B cell (primary cell): ENCODE measurements at regions of chr11 and their contacts with region 1.

Region 1: DNA sequence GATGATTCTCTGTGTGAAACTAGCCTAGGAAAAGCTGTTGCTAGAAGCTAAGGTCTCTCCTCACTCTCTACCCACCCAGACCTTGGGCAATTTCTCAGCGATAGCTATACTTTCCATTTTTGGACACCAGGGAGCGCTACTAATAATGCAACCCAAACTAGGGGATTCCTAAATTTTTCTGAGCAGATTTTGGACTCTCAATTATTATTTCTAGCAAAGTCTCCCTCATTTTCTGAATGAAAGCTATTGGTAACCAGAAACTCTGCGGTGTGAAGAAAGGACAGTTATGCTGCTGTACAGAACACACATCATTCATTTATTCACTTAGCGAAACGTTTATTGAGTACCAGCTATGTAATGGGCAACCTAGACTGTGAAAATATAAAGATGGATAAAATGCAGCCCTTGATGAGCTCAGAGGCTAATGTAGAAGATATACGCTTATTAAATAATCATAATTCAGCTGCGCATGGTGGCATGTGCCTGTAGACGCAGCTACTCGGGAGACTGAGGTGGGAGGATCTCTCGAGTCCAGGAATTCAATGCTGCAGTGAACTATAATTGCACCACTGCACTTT is 6.1 kb upstream of the STIM1 start:
- DNase-seq: peak; percentile 80
- ATAC-seq: peak; percentile 64
- H3K4me3 ChIP-seq: no peak overlapping the region
- H3K4me3 Mint-ChIP-seq: no peak overlapping the region
- H3K27ac ChIP-seq: no peak overlapping the region
- H3K27ac Mint-ChIP-seq: no peak overlapping the region
- H3K4me1 ChIP-seq: peaks cover 24% of the 10 kb centered on the region in 2 donors
- H3K4me1 Mint-ChIP-seq: peaks cover 23% of the 10 kb centered on the region
- H3K27me3 ChIP-seq: no peaks in the 10 kb centered on the region
- H3K27me3 Mint-ChIP-seq: no peaks in the 10 kb centered on the region
- CTCF ChIP-seq: peak; percentile 83

Region 2: GRCh38 chr11:3797329-3798095 is 51.9 kb before region 1 on chr11 and contains the start of gene NUP98:
- CTCF ChIA-PET with region 1: interaction called, 10 read pairs
- POLR2A ChIA-PET with region 1: no interaction called
- intact Hi-C with region 1: loop called (anchors 1 kb)
- DNase-seq: peak; percentile 100
- ATAC-seq: peak; percentile 91
- H3K4me3 ChIP-seq: peak within 1 kb of the TSS; percentile 93 to 98 (median 96)
- H3K4me3 Mint-ChIP-seq: peak within 1 kb of the TSS; percentile 97
- H3K27ac ChIP-seq: peak within 1 kb of the TSS; percentile 93 to 97
- H3K27ac Mint-ChIP-seq: peak within 1 kb of the TSS; percentile 97
- H3K4me1 ChIP-seq: peaks cover 21 to 31% of the 10 kb centered on the region in 2 donors
- H3K4me1 Mint-ChIP-seq: peaks cover 35% of the 10 kb centered on the region
- H3K27me3 ChIP-seq: no peaks in the 10 kb centered on the region
- H3K27me3 Mint-ChIP-seq: no peaks in the 10 kb centered on the region
- CTCF ChIP-seq: no peak
- total RNA-seq, gene NUP98: 105 and 111 TPM in 2 replicates

Region 3: GRCh38 chr11:3894128-3894731 is 44.8 kb after region 1 on chr11:
- CTCF ChIA-PET with region 1: interaction called, 71 read pairs
- POLR2A ChIA-PET with region 1: interaction called, 25 read pairs
- intact Hi-C with region 1: loop called (anchors 1 kb)
- DNase-seq: peak; percentile 95
- ATAC-seq: peak; percentile 98
- H3K4me3 ChIP-seq: peak overlapping the region in 4 of 5 experiments; percentile 23 to 53 (median 32)
- H3K4me3 Mint-ChIP-seq: peak overlapping the region; percentile 78
- H3K27ac ChIP-seq: peak overlapping the region; percentile 71 to 82
- H3K27ac Mint-ChIP-seq: peak overlapping the region; percentile 89
- H3K4me1 ChIP-seq: peaks cover 67 to 72% of the 10 kb centered on the region in 2 donors
- H3K4me1 Mint-ChIP-seq: peaks cover 70% of the 10 kb centered on the region
- H3K27me3 ChIP-seq: no peaks in the 10 kb centered on the region
- H3K27me3 Mint-ChIP-seq: no peaks in the 10 kb centered on the region
- CTCF ChIP-seq: no peak

Region 4: GRCh38 chr11:3947061-3947460 is 97.7 kb after region 1 on chr11:
- CTCF ChIA-PET with region 1: interaction called, 19 read pairs
- POLR2A ChIA-PET with region 1: no interaction called
- intact Hi-C with region 1: no loop called
- DNase-seq: peak; percentile 52
- ATAC-seq: peak; percentile 69
- H3K4me3 ChIP-seq: peak overlapping the region in 3 of 5 experiments; percentile 21 to 35 (median 28)
- H3K4me3 Mint-ChIP-seq: peak overlapping the region; percentile 55
- H3K27ac ChIP-seq: peak overlapping the region; percentile 59 to 84
- H3K27ac Mint-ChIP-seq: peak overlapping the region; percentile 87
- H3K4me1 ChIP-seq: peaks cover 80 to 83% of the 10 kb centered on the region in 2 donors
- H3K4me1 Mint-ChIP-seq: peaks cover 92% of the 10 kb centered on the region
- H3K27me3 ChIP-seq: no peaks in the 10 kb centered on the region
- H3K27me3 Mint-ChIP-seq: no peaks in the 10 kb centered on the region
- CTCF ChIP-seq: no peak

Region 5: DNA sequence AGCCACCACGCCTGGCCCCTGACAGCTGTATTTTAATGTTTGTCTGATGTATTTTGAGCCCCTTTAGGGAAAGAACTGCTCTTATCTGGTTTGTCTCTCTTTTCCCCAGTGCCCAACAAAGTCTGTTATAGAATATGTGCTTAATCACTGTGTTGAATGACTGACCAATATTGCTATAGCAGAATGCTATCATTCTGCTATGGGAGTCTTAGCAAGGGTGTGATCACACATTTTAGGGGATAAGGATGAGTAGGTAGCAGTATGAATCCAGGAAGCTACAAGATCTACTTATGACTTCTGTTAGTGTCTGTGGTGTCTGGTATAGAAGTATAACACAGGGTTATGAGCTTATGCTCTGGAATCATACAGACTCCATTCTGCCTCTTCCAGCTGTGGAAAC is 127.7 kb after region 1 on chr11:
- CTCF ChIA-PET with region 1: interaction called, 132 read pairs
- POLR2A ChIA-PET with region 1: interaction called, 6 read pairs
- intact Hi-C with region 1: loop called (anchors 2 kb)
- DNase-seq: no peak
- ATAC-seq: no peak
- H3K4me3 ChIP-seq: no peak overlapping the region
- H3K4me3 Mint-ChIP-seq: no peak overlapping the region
- H3K27ac ChIP-seq: no peak overlapping the region
- H3K27ac Mint-ChIP-seq: no peak overlapping the region
- H3K4me1 ChIP-seq: no peaks in the 10 kb centered on the region
- H3K4me1 Mint-ChIP-seq: peaks cover 34% of the 10 kb centered on the region
- H3K27me3 ChIP-seq: no peaks in the 10 kb centered on the region
- H3K27me3 Mint-ChIP-seq: no peaks in the 10 kb centered on the region
- CTCF ChIP-seq: no peak

Region 6: GRCh38 chr11:4064278-4064955 is 215.0 kb after region 1 on chr11:
- CTCF ChIA-PET with region 1: interaction called, 819 read pairs
- POLR2A ChIA-PET with region 1: interaction called, 5 read pairs
- intact Hi-C with region 1: no loop called
- DNase-seq: no peak
- ATAC-seq: no peak
- H3K4me3 ChIP-seq: no peak overlapping the region
- H3K4me3 Mint-ChIP-seq: no peak overlapping the region
- H3K27ac ChIP-seq: peak overlapping the region in 1 of 2 donors; percentile 11
- H3K27ac Mint-ChIP-seq: no peak overlapping the region
- H3K4me1 ChIP-seq: peaks cover 18 to 26% of the 10 kb centered on the region in 2 donors
- H3K4me1 Mint-ChIP-seq: peaks cover 43% of the 10 kb centered on the region
- H3K27me3 ChIP-seq: no peaks in the 10 kb centered on the region
- H3K27me3 Mint-ChIP-seq: no peaks in the 10 kb centered on the region
- CTCF ChIP-seq: no peak